Posterior vena cava (tissue), 2 donors: ENCODE measurements at regions of chr16 and their contacts with region 1.

Region 1: DNA sequence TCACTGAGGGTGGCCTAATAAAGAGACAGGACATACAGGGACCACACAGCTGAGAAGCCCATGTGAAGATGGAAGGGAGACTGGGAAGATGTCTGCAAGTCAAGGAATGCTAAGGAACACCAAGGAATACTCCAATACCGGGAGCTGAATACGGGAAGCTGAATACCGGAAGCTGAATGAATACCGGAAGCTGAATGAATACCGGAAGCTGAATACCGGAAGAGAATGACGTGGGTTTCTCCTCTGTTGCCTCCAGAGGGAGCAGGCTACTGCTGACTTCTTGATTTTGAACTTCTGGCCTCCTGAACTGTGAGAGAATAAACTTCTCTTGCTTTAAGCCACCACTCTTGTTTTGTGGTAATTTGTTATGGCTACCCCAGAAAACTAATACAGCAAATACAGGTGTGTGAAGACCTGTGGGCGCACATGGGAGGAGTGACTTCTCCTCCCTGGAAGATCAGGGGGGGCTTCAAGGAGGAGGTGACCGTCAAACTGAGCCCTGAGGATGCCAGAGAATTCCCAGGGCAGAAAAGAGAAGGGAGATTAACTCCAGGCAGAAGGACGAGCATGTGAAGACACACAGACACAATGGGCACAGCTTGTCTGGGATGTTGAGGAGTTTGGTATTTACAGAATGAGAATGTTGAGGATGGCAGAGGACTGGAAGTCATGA is 259.9 kb downstream of the IRF8 start:
- DNase-seq: no peak

Region 2: GRCh38 chr16:85592700-85593493 is 565.9 kb before region 1 on chr16:
- intact Hi-C with region 1: loop called in 1 of 2 experiments (anchors 10 kb)
- DNase-seq: no peak

Region 3: DNA sequence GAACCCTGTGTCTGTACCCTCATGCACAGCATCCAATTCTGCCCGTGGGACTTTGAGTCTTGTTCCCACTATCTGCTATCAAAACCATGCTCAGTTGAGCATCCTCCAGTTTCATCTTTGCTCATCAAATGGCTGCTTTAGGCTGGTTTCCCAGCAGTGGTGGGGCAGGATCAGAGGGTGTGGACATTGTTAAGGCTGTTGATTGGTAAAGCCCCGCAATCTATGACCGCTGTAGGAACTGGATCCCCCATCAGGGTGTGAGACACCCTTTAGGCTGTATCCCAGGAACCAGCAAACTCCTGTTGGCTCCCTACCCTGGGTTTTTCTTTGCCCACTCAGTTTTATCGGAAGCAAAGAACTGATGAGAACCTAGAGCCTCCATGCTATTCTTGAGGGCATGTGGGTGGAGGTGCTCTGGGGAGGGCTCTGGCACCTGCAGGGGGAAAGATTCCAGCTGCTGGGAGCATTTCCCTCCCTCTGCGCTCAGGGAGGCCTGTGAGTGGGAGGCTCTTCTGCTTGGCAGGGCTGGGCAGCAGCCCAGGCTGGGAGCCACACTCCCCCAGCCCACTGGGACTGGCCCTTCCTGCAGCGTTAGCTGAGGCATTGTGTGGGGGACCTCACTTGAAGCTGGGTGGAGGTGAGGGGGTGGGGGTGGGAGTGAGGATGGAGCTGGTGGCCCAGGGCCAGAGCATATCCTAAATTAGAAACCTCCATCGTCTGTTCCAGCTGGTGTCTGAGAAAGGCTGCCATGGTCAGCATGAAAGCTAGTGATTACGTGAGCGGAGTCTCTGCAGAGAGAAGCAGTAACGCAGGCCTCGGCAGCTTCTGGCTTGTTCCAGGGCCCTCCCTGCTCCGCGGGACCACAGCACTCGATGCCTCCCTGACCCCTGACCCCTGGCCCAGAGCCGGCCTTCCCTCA is 99.3 kb before region 1 on chr16:
- intact Hi-C with region 1: no loop called
- DNase-seq: peak; percentile 92